Activated CD8-positive, alpha-beta T cell treated with anti-CD3 and anti-CD28 coated beads, Interleukin-2, amount 10 ng/mL, durations not matched to agents 7 days and 5 days (primary cell): ENCODE measurements at regions of chr6 and their contacts with region 1.

Region 1: GRCh38 chr6:35240840-35241801 is 18.4 kb upstream of the ZNF76 start:
- DNase-seq: peak; percentile 82
- ATAC-seq: peak; percentile 86
- H3K4me3 Mint-ChIP-seq: no peak overlapping the region
- H3K27ac Mint-ChIP-seq: no peak overlapping the region
- H3K4me1 Mint-ChIP-seq: peaks cover 3% of the 10 kb centered on the region
- H3K27me3 Mint-ChIP-seq: no peaks in the 10 kb centered on the region

Region 2: GRCh38 chr6:34986845-34987246 is 254.3 kb before region 1 on chr6:
- CTCF ChIA-PET with region 1: interaction called, 25 read pairs
- POLR2A ChIA-PET with region 1: no interaction called
- DNase-seq: peak; percentile 77
- ATAC-seq: peak; percentile 55
- H3K4me3 Mint-ChIP-seq: no peak overlapping the region
- H3K27ac Mint-ChIP-seq: no peak overlapping the region
- H3K4me1 Mint-ChIP-seq: no peaks in the 10 kb centered on the region
- H3K27me3 Mint-ChIP-seq: no peaks in the 10 kb centered on the region

Region 3: GRCh38 chr6:35096129-35096862 is 144.8 kb before region 1 on chr6:
- CTCF ChIA-PET with region 1: no interaction called
- POLR2A ChIA-PET with region 1: no interaction called
- DNase-seq: no peak
- ATAC-seq: no peak
- H3K4me3 Mint-ChIP-seq: no peak overlapping the region
- H3K27ac Mint-ChIP-seq: no peak overlapping the region
- H3K4me1 Mint-ChIP-seq: no peaks in the 10 kb centered on the region
- H3K27me3 Mint-ChIP-seq: peaks cover 11% of the 10 kb centered on the region

Region 4: GRCh38 chr6:35139908-35140655 is 101.0 kb before region 1 on chr6:
- CTCF ChIA-PET with region 1: interaction called, 31 read pairs
- POLR2A ChIA-PET with region 1: no interaction called
- DNase-seq: peak; percentile 67
- ATAC-seq: peak; percentile 45
- H3K4me3 Mint-ChIP-seq: no peak overlapping the region
- H3K27ac Mint-ChIP-seq: no peak overlapping the region
- H3K4me1 Mint-ChIP-seq: peaks cover 18% of the 10 kb centered on the region
- H3K27me3 Mint-ChIP-seq: peaks cover 26% of the 10 kb centered on the region

Region 5: DNA sequence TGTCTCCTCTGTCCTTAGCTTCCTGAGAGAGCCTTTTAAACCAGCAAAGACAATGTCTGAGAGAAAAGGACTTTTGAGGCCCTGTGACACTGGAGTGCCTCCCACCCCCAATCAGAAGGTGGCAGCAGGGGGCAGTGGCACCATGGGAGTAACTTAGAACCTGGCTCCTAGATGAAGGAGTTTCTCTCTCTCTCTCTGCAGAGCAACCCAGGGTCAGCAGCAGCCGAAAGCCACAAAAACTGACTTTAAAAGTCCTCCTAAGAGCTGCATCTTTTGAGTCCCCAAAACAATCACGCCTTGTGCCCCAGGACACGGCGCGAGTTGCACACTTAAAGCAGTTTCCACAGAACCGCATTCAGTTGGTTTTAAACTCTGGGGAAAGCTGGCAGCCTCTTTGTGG is 94.7 kb before region 1 on chr6:
- CTCF ChIA-PET with region 1: interaction called, 20 read pairs
- POLR2A ChIA-PET with region 1: no interaction called
- DNase-seq: peak; percentile 48
- ATAC-seq: peak; percentile 44
- H3K4me3 Mint-ChIP-seq: no peak overlapping the region
- H3K27ac Mint-ChIP-seq: no peak overlapping the region
- H3K4me1 Mint-ChIP-seq: peaks cover 31% of the 10 kb centered on the region
- H3K27me3 Mint-ChIP-seq: peaks cover 14% of the 10 kb centered on the region

Region 6: DNA sequence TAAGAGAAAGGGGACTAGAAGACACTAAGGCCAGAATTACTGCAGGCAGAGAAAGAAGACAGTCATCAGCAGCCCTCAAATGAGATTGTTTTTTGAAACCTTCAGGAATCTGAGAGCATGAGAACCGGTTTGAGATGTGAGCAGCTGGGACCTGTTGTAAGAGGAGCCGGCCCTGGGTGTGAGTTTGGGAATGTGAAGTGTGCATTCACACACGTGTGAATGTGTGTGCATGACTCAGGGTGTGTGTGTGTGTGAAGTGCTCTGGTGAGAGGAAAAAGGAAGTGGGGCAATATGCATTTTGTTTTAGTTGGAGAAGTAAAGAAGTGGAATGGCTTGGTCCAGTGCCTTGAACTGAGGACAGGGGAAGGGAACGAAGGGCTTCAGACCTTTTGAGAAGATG is 23.1 kb before region 1 on chr6:
- CTCF ChIA-PET with region 1: interaction called, 16 read pairs
- POLR2A ChIA-PET with region 1: interaction called, 3 read pairs
- DNase-seq: no peak
- ATAC-seq: no peak
- H3K4me3 Mint-ChIP-seq: no peak overlapping the region
- H3K27ac Mint-ChIP-seq: no peak overlapping the region
- H3K4me1 Mint-ChIP-seq: peaks cover 4% of the 10 kb centered on the region
- H3K27me3 Mint-ChIP-seq: peaks cover 42% of the 10 kb centered on the region

Region 7: DNA sequence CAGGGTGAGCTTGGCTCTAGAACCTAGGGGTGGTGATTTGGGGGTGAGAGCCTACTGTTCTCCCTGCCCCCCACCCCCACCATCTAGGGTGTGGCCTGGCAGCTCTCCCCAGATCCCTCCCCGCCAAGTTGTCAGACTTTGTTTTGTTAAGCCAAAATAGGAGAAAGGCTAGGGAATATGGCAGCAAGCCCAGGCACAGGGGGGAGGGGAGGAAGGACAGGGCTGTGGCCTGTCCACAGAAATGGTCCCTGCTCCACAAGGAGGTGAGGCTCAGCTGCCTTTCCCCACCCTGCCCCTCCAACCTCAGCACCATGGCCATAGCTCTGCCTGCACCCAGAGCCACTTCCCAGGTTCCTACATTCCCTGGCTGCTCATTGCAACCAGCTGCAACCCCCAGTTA is 10.2 kb before region 1 on chr6:
- CTCF ChIA-PET with region 1: interaction called, 54 read pairs
- POLR2A ChIA-PET with region 1: interaction called, 3 read pairs
- DNase-seq: no peak
- ATAC-seq: no peak
- H3K4me3 Mint-ChIP-seq: no peak overlapping the region
- H3K27ac Mint-ChIP-seq: no peak overlapping the region
- H3K4me1 Mint-ChIP-seq: no peaks in the 10 kb centered on the region
- H3K27me3 Mint-ChIP-seq: no peaks in the 10 kb centered on the region

Region 8: DNA sequence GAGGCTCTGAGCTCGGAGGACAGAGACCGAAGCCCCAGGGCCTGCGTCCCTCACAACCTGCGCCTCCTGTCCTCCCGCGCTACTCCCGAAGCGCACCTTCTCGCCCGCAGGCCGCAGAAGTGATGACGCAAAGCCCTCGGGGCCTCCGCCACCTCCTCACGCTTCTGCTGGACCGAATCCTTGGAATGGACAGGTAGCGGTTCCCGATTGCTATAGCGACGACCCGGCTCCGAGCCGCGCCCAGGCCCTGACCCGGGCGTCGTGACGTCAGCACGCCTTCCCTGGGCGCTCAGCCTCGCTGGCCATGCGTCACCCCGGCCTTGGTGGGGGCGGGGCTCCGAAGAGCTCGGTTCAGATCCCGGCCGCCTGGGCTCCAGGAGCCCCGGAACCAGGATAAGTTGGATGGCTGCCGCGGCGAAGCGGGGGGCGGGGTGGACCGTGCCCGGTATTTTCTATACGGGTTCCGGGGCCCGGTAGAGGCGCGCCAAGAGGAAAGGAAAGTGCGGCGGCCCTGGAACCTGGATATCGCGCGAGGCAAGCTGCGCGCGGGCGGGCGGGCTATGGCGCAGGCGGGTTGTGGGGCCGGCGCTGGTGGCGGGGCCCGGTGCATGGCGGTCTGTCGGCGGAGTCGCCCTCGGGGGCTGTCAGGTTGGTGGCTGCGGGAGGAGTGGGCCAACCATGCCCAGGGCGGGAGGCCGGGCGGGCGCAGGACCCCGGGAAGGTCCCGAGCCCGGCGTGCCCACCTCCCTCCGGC is 18.2 kb after region 1 on chr6 and contains the start of gene ZNF76:
- CTCF ChIA-PET with region 1: interaction called, 25 read pairs
- POLR2A ChIA-PET with region 1: interaction called, 4 read pairs
- DNase-seq: peak; percentile 92
- ATAC-seq: peak; percentile 89
- H3K4me3 Mint-ChIP-seq: peak within 1 kb of the TSS; percentile 97
- H3K27ac Mint-ChIP-seq: peak within 1 kb of the TSS; percentile 92
- H3K4me1 Mint-ChIP-seq: peaks cover 38% of the 10 kb centered on the region
- H3K27me3 Mint-ChIP-seq: no peaks in the 10 kb centered on the region
- total RNA-seq, gene ZNF76: 39.4 to 41.6 TPM

Region 9: DNA sequence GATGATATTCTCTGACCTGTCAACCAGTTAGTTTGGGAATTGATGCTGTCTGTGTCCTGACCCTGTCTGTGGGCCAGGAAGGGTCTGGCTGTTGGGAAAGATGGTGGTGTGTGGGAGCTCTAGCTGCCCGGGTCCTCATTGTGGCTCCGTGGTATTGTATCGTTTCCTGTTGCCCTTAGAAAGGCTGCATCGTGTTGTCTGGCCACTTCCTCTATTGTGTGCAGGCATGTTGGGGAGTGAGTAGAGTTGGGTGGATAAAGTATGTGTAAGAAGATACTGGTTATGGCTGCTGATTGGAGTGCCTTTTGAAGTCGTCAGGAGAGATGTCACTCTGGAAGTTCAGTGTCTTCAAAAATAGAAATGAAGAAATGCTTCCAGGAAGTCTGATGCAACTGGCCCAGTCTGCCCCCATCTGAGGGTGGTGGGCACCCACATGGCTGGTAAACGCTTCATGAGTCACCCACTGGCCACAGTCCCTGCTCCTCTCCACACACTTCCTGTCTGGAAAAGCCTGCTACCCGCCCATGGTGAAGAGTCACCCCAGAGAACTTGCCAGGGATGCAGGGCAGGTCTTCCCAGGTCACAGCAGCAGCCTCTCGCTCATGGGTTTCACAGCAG is 129.1 kb after region 1 on chr6:
- CTCF ChIA-PET with region 1: no interaction called
- POLR2A ChIA-PET with region 1: no interaction called
- DNase-seq: peak; percentile 62
- ATAC-seq: peak; percentile 79
- H3K4me3 Mint-ChIP-seq: peak overlapping the region; percentile 51
- H3K27ac Mint-ChIP-seq: peak overlapping the region; percentile 87
- H3K4me1 Mint-ChIP-seq: peaks cover 61% of the 10 kb centered on the region
- H3K27me3 Mint-ChIP-seq: no peaks in the 10 kb centered on the region